ENCODE measurements at regions of chr21 and their contacts with region 1.

Region 1: DNA sequence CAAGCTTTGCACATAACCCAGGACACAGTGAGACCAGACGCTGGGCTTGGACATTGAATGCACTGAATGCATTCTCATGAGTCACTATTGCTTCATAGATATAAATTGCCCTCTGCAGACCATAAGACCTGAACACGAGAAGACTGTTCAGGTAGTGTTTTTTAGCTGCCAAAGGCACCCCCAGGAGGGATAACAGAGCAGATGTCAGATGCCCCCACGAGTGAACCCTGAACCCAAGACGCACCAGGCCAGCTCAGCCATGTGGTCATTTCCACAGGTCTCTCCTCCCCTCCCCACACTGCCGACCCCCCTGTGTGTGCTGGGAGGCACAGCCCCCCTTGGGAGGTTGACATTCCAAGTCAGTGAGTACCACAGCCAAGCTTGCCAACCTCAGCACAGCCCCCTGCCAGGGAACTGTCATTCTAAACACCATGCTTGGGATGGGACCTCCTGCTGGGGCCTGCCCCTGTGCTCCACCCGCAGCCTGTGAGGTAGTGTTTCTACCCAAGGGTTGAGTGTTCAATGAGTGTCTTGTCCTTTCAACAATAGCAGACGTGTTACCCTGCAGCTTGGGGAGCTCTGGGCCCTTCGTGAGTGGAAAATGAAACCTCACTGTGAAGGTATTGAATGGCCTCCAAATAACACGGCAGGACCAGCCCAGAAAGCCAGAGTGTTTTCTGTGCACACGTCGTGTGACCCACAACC is 68.2 kb downstream of the PSMG1 start:
- DNase-seq: no peak
- ATAC-seq: no peak
- H3K4me3 ChIP-seq: no peak overlapping the region
- H3K27ac ChIP-seq: no peak overlapping the region
- H3K4me1 ChIP-seq: peaks cover 0 to 24% (median 13%) of the 10 kb centered on the region in 9 donors
- H3K27me3 ChIP-seq: no peaks in the 10 kb centered on the region
- CTCF ChIP-seq: no peak

Region 2: DNA sequence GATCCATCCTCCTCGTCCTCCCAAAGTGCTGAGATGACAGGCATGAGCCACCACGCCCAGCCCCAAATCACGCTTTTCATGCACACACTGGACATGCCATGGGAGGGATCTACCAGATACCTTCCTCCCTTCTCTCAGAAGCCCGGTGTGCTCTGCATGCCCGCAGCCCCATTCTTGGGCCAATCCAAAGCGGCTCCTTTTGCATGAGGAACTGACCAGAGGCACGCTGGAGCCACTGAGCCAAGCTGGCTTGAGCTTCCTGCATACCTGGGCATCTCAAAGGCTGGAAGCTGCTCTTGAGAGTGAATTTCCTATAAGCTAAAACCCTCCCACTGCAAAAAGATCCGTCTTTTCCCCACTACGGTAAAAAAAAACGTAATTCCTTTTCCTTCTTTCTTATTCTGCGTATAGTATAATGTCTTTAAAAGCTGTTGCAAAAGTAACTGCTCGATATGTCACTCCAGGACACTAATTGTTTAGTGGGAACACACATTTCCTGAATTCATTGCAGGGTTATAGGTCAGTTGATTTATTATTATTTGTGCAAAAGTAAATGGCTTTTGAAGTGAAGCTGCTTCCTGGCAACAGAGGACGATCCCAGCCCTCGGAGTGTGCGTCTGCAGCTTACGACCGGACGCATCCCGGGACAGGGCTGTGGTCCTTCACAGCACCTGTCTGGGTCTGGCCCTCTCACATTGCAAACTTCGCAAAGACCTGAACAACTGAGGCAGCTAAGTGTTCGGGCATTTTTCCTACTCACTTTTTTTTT is 371.1 kb before region 1 on chr21:
- intact Hi-C with region 1: loop called in 1 of 10 experiments (anchors 5 kb)
- DNase-seq: peak; percentile 27 to 44
- ATAC-seq: peak; percentile 58 to 92 (median 89)
- H3K4me3 ChIP-seq: peak overlapping the region in 2 of 10 donors; percentile 16 to 24
- H3K27ac ChIP-seq: peak overlapping the region in 7 of 10 donors; percentile 16 to 73 (median 36)
- H3K4me1 ChIP-seq: peaks cover 0 to 26% (median 3%) of the 10 kb centered on the region in 9 donors
- H3K27me3 ChIP-seq: no peaks in the 10 kb centered on the region
- CTCF ChIP-seq: no peak

Region 3: DNA sequence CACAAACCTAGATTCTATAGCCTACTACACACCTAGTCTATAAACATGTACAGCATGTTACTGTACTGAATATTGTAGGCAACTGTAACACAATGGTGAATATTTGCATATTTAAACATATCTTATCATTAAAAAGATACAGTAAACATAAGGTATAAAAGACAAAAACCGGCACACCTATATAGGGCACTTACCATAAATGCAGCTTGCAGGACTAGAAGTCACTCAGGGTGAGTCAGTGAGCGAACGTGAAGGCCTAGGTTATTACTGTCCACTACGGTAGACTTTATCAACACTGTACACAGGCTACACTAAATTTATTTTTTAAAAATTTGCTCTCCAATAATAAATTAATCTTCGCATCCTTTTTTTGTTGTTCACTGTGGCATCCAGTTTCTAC is 54.9 kb after region 1 on chr21:
- intact Hi-C with region 1: loop called in 1 of 10 experiments (anchors 2 kb)
- DNase-seq: no peak
- ATAC-seq: no peak
- H3K4me3 ChIP-seq: no peak overlapping the region
- H3K27ac ChIP-seq: no peak overlapping the region
- H3K4me1 ChIP-seq: no peaks in the 10 kb centered on the region
- H3K27me3 ChIP-seq: no peaks in the 10 kb centered on the region
- CTCF ChIP-seq: no peak